PC-9 (cell line): ENCODE measurements at regions of chr12 and their contacts with region 1.

Region 1: GRCh38 chr12:30695199-30696103 is at the start of gene IPO8:
- DNase-seq: peak; percentile 80 to 95
- H3K4me3 ChIP-seq: peak within 1 kb of the TSS; percentile 95
- H3K27ac ChIP-seq: peak within 1 kb of the TSS; percentile 15
- H3K4me1 ChIP-seq: peaks cover 19% of the 10 kb centered on the region
- H3K27me3 ChIP-seq: no peaks in the 10 kb centered on the region
- CTCF ChIP-seq: peak; percentile 45; the same call in 1 of the 2 replicates
- total RNA-seq, gene IPO8: 64.5 and 75.0 TPM in 2 replicates

Region 2: DNA sequence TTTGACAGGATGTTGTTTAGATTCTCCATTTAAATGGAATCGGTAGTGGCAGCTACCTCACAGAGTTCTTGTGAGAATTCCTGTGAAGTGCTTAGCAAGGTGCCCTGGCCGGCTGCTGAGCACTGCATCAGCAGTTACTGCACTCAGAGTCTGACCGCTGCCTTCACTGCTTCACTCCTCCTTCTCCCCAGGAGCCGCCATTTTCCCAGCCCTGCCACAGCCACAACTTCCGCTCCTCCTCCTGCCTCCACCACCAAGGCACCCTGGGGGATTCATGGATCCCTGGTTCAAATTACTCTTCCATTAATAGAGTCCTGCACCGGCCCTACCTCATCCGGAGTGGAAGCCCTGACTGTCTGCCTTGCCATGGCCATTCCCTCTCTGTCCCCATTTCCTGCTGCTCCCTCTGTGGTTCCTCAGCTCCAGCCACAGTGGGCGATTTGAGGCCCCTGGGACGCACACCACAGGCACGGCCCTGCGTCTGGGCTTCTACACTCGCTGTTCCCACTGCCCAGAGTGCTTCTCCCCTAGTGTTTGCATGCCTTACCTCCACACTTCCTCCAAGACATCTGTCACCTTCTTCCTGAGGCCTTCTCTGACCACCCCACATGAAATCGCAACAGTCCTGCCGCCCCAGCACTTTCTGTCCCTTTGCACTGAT is 210.1 kb before region 1 on chr12:
- CTCF ChIA-PET with region 1: no interaction called
- POLR2A ChIA-PET with region 1: no interaction called
- intact Hi-C with region 1: no loop called
- DNase-seq: no peak
- H3K4me3 ChIP-seq: no peak overlapping the region
- H3K27ac ChIP-seq: no peak overlapping the region
- H3K4me1 ChIP-seq: no peaks in the 10 kb centered on the region
- H3K27me3 ChIP-seq: no peaks in the 10 kb centered on the region
- CTCF ChIP-seq: no peak

Region 3: DNA sequence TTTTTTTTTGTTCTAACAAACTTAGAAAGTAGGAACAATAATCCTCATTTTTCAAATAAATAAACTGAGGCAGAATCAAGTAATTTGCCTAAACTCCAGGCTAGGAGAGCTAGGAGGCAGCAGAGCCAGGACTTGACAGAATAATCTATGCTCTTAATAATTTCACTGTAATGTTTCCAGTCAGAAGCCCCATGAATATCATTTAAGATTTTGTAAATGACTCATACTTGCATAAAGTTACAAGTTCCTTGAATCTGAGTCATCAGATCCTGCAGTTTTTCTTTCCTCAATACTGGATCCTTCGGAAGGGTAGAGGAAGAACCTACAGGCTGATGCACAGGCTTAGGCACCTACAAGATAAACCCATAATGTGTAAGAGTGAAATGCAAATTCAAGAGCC is 30.3 kb after region 1 on chr12:
- CTCF ChIA-PET with region 1: interaction called, 17 read pairs
- POLR2A ChIA-PET with region 1: no interaction called
- intact Hi-C with region 1: no loop called
- DNase-seq: peak in 1 of 2 experiments; percentile 81
- H3K4me3 ChIP-seq: no peak overlapping the region
- H3K27ac ChIP-seq: peak overlapping the region; percentile 62
- H3K4me1 ChIP-seq: peaks cover 24% of the 10 kb centered on the region
- H3K27me3 ChIP-seq: no peaks in the 10 kb centered on the region
- CTCF ChIP-seq: no peak

Region 4: DNA sequence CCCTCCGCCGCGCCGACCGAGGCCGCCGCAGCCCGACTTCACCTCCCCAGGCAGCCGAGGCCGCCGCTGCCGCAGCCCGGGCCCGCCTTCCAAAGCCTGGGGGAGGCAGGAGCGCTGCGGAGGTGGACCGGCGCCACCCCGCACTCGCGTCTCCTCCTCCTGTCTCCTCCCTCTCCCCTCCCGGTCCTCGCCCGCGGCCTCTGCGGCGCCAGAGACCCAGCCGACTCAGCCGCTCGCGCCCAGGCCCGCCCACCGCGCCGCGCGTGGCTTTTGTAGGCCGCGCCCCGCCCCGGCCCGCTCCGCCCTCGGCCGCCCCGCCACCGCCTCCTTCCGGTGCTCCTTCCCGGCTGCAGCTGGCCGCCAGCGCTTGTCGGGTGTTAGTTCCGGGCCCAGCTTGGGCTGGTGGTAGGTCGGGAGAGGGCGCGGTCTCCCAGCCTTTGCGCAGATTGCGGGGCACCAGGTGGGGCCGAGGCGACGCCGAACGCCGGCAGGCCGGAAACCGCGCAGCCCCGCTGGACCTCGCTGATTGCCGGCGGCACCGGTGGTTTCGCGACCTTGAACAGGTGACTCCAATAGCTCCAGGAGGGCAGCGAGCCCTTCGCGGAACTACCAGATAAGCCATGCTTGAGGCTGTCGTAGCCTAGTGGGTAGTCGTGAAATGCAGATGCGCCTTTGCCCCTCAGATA is 59.4 kb after region 1 on chr12 and contains the start of gene CAPRIN2:
- CTCF ChIA-PET with region 1: interaction called, 5 read pairs
- POLR2A ChIA-PET with region 1: no interaction called
- intact Hi-C with region 1: loop called (anchors 1 kb)
- DNase-seq: peak; percentile 86 to 100
- H3K4me3 ChIP-seq: peak within 1 kb of the TSS; percentile 74
- H3K27ac ChIP-seq: peak within 1 kb of the TSS; percentile 70
- H3K4me1 ChIP-seq: peaks cover 46% of the 10 kb centered on the region
- H3K27me3 ChIP-seq: no peaks in the 10 kb centered on the region
- CTCF ChIP-seq: peak; percentile 41; the same call in 1 of the 2 replicates
- total RNA-seq, gene CAPRIN2: 27.4 and 29.5 TPM in 2 replicates

Region 5: DNA sequence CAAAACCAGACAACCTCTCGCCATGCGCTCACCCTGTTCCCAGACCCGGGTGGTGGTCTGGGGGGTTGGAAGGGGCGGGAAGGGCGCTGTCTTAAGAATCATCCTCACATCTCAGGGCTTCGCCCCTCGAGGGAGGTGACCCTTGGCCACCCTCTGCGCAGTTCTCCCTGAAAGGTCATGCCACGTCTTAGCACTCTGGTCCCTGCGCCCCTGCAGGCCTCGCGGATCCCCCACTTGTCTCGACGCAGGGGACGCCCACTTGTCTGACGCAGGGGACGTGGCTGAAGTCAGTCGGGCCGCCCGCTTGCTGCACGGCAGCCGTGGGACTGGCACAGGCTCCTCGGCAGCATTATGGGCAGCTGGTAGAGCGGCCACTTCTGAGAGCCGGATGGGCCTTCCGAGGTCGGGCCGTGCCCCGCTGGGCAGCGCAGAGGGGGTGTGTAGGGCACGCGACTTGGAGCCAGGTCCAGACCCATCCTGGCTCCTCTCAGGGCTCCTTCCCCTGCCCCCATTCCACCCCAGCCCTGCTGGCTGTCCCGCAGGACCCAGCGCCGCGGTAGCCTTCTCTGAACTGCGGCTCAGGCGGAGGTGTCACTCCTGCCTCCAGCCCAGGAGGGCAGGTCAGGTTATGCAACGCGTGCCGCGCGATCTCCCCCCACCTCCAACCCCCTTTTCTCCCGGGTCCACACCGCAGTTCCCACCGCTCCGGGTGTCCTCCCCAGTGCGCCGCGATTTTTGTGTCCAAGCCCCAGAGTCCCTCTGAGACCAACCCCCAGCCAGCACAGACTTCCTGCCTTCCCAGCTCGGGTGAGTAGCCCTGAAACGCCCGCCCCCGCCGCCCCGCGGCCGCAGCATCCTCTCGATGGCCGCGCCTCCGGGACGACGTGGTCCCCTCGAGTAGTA is 100.2 kb after region 1 on chr12:
- CTCF ChIA-PET with region 1: no interaction called
- POLR2A ChIA-PET with region 1: no interaction called
- intact Hi-C with region 1: loop called (anchors 1 kb)
- DNase-seq: peak; percentile 67 to 78
- H3K4me3 ChIP-seq: peak overlapping the region; percentile 82
- H3K27ac ChIP-seq: peak overlapping the region; percentile 94
- H3K4me1 ChIP-seq: peaks cover 55% of the 10 kb centered on the region
- H3K27me3 ChIP-seq: no peaks in the 10 kb centered on the region
- CTCF ChIP-seq: no peak

Region 6: GRCh38 chr12:30822385-30823155 is 127.1 kb after region 1 on chr12:
- CTCF ChIA-PET with region 1: interaction called, 22 read pairs
- POLR2A ChIA-PET with region 1: no interaction called
- intact Hi-C with region 1: no loop called
- DNase-seq: peak in 1 of 2 experiments; percentile 61
- H3K4me3 ChIP-seq: no peak overlapping the region
- H3K27ac ChIP-seq: no peak overlapping the region
- H3K4me1 ChIP-seq: no peaks in the 10 kb centered on the region
- H3K27me3 ChIP-seq: no peaks in the 10 kb centered on the region
- CTCF ChIP-seq: no peak

Region 7: GRCh38 chr12:30959110-30959710 is 263.8 kb after region 1 on chr12:
- CTCF ChIA-PET with region 1: no interaction called
- POLR2A ChIA-PET with region 1: no interaction called
- intact Hi-C with region 1: no loop called
- DNase-seq: no peak
- H3K4me3 ChIP-seq: no peak overlapping the region
- H3K27ac ChIP-seq: no peak overlapping the region
- H3K4me1 ChIP-seq: no peaks in the 10 kb centered on the region
- H3K27me3 ChIP-seq: peaks cover 9% of the 10 kb centered on the region; the same call in 1 of the 2 replicates
- CTCF ChIP-seq: no peak

Region 8: GRCh38 chr12:30970559-30971197 is 275.2 kb after region 1 on chr12:
- CTCF ChIA-PET with region 1: no interaction called
- POLR2A ChIA-PET with region 1: interaction called, 17 read pairs
- intact Hi-C with region 1: no loop called
- DNase-seq: peak; percentile 70 to 76
- H3K4me3 ChIP-seq: no peak overlapping the region
- H3K27ac ChIP-seq: no peak overlapping the region
- H3K4me1 ChIP-seq: peaks cover 32% of the 10 kb centered on the region
- H3K27me3 ChIP-seq: no peaks in the 10 kb centered on the region
- CTCF ChIP-seq: no peak